Activated T-helper 1 cell treated with anti-CD3 and anti-CD28 coated beads, Interleukin-12 subunit alpha, Interleukin-12 subunit beta, Interleukin-2, Interleukin-4 antibody, amounts not matched to agents 30 ng/mL and 10 ng/mL and 1 ng/mL, durations not matched to agents 14 hours and 24 hours and 36 hours (primary cell): ENCODE measurements at regions of chr12 and their contacts with region 1.

Region 1: GRCh38 chr12:54497883-54498282 is 331 bp downstream of the NCKAP1L start:
- DNase-seq: no peak
- H3K4me3 Mint-ChIP-seq: peak overlapping the region; percentile 99
- H3K27ac Mint-ChIP-seq: peak overlapping the region; percentile 96
- H3K4me1 Mint-ChIP-seq: peaks cover 44% of the 10 kb centered on the region
- H3K27me3 Mint-ChIP-seq: no peaks in the 10 kb centered on the region

Region 2: GRCh38 chr12:54140588-54141388 is 357.1 kb before region 1 on chr12:
- intact Hi-C with region 1: no loop called
- DNase-seq: no peak
- H3K4me3 Mint-ChIP-seq: no peak overlapping the region
- H3K27ac Mint-ChIP-seq: no peak overlapping the region
- H3K4me1 Mint-ChIP-seq: no peaks in the 10 kb centered on the region
- H3K27me3 Mint-ChIP-seq: peaks cover 36% of the 10 kb centered on the region

Region 3: GRCh38 chr12:54214553-54215406 is 283.1 kb before region 1 on chr12:
- intact Hi-C with region 1: loop called (anchors 1 kb)
- DNase-seq: peak; percentile 86
- H3K4me3 Mint-ChIP-seq: peak overlapping the region; percentile 72
- H3K27ac Mint-ChIP-seq: no peak overlapping the region
- H3K4me1 Mint-ChIP-seq: peaks cover 19% of the 10 kb centered on the region
- H3K27me3 Mint-ChIP-seq: peaks cover 13% of the 10 kb centered on the region

Region 4: GRCh38 chr12:54398995-54399793 is 98.7 kb before region 1 on chr12:
- intact Hi-C with region 1: loop called (anchors 1 kb)
- DNase-seq: peak; percentile 75
- H3K4me3 Mint-ChIP-seq: no peak overlapping the region
- H3K27ac Mint-ChIP-seq: peak overlapping the region; percentile 71
- H3K4me1 Mint-ChIP-seq: peaks cover 11% of the 10 kb centered on the region
- H3K27me3 Mint-ChIP-seq: no peaks in the 10 kb centered on the region

Region 5: DNA sequence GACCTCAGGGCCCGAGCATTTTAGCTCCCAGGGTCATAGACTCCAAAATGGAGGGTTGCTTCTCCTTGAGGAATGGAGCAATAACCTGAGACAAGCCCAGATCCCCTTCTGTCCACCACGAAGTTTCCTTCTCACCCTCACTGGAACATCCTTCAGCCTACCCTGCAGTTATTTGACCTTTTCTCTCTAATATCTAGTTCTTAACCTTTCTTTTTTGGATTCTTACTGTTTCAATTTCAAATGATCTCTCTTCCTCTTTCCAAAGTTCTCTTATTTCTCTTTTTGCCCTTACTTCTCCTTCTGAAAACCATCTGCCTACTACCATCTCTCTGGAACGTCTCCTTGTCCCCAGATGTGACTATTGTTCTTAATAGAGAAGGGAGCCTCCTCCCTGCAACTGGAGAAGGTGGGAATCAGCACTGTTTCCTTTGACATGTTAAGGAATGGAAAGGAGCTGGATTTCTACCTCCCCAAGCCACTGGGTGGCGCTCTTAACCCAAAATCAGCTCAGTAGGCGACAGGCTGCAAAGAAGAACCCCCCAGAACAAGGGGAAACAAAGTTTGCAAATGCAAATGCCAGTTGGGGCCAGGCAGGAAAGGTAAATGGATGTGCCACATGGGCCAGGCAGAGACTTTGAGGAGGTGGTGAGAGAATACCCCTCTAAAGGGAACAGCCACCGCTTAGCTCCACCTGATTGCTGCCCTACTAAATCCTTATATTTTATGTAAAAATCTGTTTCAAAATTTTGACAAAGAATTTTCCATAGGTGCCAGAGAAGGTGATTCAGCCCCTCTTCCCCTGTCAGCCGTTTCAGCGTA is 29.1 kb after region 1 on chr12:
- intact Hi-C with region 1: loop called (anchors 1 kb)
- DNase-seq: no peak
- H3K4me3 Mint-ChIP-seq: no peak overlapping the region
- H3K27ac Mint-ChIP-seq: no peak overlapping the region
- H3K4me1 Mint-ChIP-seq: peaks cover 10% of the 10 kb centered on the region
- H3K27me3 Mint-ChIP-seq: no peaks in the 10 kb centered on the region

Region 6: GRCh38 chr12:54560374-54560858 is 62.5 kb after region 1 on chr12:
- intact Hi-C with region 1: loop called (anchors 1 kb)
- DNase-seq: peak; percentile 86
- H3K4me3 Mint-ChIP-seq: peak overlapping the region; percentile 78
- H3K27ac Mint-ChIP-seq: peak overlapping the region; percentile 91
- H3K4me1 Mint-ChIP-seq: peaks cover 47% of the 10 kb centered on the region
- H3K27me3 Mint-ChIP-seq: no peaks in the 10 kb centered on the region